ENCODE measurements at regions of chr1 and their contacts with region 1.

Region 1: GRCh38 chr1:91872560-91873081 is 13.3 kb downstream of the TGFBR3 start:
- DNase-seq: no peak
- H3K4me3 ChIP-seq: no peak overlapping the region
- H3K27ac ChIP-seq: no peak overlapping the region
- H3K4me1 ChIP-seq: peaks cover 29% of the 10 kb centered on the region
- H3K27me3 ChIP-seq: no peaks in the 10 kb centered on the region
- CTCF ChIP-seq: no peak
- EP300 ChIP-seq: no peak
- POLR2A ChIP-seq: no peak

Region 2: DNA sequence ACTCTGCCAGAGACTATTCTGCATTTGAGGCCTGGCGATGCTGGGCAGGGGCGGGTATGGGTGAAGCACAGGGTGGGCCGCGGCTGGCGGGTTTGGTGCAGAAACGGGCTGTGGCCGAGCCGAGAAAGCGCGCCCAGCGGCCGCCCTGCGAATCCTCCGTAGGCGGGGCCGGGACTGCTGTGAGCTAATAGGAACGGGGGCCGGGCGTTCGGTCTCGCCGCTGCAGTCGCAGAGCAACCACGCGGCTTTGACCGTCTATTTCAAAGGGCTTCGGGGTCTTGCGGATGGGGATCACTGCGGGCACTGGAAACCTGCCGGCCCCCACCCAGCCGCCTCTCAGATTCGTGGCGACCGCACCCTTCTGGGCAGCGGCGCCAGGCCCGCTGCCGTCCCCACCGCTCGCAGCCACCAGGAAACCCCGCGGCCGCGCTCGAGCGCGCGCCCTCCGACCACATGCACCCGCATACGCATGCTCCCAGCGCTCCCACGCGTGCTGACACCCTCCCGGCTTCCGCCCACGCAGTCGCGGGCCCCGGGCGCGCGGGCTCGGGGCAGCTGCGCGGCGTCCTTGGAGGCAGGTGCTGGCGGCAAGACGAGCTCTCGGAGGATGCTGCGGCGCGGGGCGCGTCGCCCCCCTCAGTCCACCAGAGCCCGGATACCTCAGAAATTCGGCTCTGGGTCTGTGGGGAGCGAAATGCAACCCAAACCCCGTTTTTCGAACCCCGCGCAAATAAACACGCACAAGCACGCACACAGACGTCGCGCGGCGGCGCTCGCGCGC is 1973.8 kb after region 1 on chr1:
- intact Hi-C with region 1: loop called in 1 of 4 experiments (anchors 5 kb)
- DNase-seq: peak; percentile 86 to 91 (median 89)
- H3K4me3 ChIP-seq: peak overlapping the region; percentile 88
- H3K27ac ChIP-seq: peak overlapping the region; percentile 97 to 99
- H3K4me1 ChIP-seq: peaks cover 4% of the 10 kb centered on the region
- H3K27me3 ChIP-seq: no peaks in the 10 kb centered on the region
- CTCF ChIP-seq: peak in 2 of 3 donors; percentile 20 to 37
- EP300 ChIP-seq: no peak
- POLR2A ChIP-seq: peak; percentile 77

Measured in ovary (tissue), 10 donors.